ENCODE measurements at regions of chr1 and their contacts with region 1.

Region 1: GRCh38 chr1:235679644-235680043 is 30.1 kb upstream of the GNG4 start:
- DNase-seq: no peak
- ATAC-seq: no peak
- H3K4me3 ChIP-seq: no peak overlapping the region
- H3K27ac ChIP-seq: no peak overlapping the region
- H3K4me1 ChIP-seq: no peaks in the 10 kb centered on the region
- H3K27me3 ChIP-seq: no peaks in the 10 kb centered on the region
- CTCF ChIP-seq: no peak

Region 2: DNA sequence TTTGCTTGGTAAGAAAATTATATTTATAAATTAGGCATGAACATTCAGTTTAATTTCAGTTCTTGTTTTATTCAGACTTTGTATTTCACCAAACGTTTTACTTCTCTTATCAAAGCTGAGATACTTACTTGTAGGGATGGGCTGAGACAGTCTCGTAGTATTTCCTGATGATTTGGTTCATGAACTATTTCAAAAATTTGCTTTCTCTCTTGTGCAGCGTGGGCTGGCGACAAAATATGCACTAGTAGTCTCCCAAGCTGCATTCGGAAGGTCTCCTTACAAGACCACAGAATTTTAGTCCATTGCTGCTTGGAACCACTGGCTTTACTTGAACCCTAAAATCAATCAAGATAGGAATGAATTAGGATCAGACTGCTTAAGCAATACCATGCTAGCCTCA is 61.6 kb after region 1 on chr1:
- intact Hi-C with region 1: loop called in 1 of 2 experiments (anchors 2 kb)
- DNase-seq: no peak
- ATAC-seq: no peak
- H3K4me3 ChIP-seq: no peak overlapping the region
- H3K27ac ChIP-seq: no peak overlapping the region
- H3K4me1 ChIP-seq: no peaks in the 10 kb centered on the region
- H3K27me3 ChIP-seq: no peaks in the 10 kb centered on the region
- CTCF ChIP-seq: no peak

Measured in psoas muscle (tissue), 8 donors.